ENCODE measurements at regions of chr18 and their contacts with region 1.

Region 1: GRCh38 chr18:76823587-76824011 is 1.2 kb downstream of the ZNF236 start:
- DNase-seq: no peak
- ATAC-seq: 0 out of 2 replicates have a peak, but pooled peaks have one; percentile 1
- H3K4me3 ChIP-seq: peak overlapping the region; percentile 78 to 86
- H3K27ac ChIP-seq: peak overlapping the region; percentile 90
- H3K4me1 ChIP-seq: peaks cover 36% of the 10 kb centered on the region
- H3K27me3 ChIP-seq: no peaks in the 10 kb centered on the region
- CTCF ChIP-seq: no peak

Region 2: DNA sequence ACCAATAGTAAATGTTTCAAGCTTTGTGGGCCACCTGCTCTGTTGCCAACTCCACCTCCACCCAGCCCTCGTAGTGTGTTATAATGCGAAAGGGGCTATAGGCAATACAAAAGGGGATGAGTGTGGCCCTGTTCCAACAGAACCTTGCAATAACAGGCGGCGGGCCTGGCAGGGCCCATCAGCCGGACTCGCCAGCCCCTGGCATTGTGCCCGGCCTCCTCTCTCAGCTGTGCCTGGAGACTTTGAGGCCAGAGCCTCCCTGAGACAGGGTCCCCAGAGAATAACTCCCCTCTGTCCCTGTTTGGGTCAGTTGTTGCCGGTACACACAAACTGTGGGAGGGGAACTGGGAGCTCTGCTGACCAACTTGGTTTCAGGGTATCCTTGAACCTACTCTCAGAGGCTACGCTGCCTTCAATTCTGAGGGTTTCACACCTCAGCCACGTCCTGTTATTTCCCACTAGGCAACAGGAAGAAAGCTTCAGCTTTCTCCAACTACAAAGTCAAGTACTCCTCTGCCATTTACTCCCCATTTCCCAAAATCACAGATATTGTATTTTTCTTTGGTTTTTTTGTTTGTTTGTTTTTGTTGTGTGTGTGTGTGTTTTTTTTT is 59.2 kb before region 1 on chr18:
- CTCF ChIA-PET with region 1: no interaction called
- POLR2A ChIA-PET with region 1: interaction called, 19 read pairs
- in situ Hi-C with region 1: no loop called
- intact Hi-C with region 1: no loop called
- DNase-seq: no peak
- ATAC-seq: no peak
- H3K4me3 ChIP-seq: no peak overlapping the region
- H3K27ac ChIP-seq: no peak overlapping the region
- H3K4me1 ChIP-seq: no peaks in the 10 kb centered on the region
- H3K27me3 ChIP-seq: no peaks in the 10 kb centered on the region
- CTCF ChIP-seq: no peak

Region 3: DNA sequence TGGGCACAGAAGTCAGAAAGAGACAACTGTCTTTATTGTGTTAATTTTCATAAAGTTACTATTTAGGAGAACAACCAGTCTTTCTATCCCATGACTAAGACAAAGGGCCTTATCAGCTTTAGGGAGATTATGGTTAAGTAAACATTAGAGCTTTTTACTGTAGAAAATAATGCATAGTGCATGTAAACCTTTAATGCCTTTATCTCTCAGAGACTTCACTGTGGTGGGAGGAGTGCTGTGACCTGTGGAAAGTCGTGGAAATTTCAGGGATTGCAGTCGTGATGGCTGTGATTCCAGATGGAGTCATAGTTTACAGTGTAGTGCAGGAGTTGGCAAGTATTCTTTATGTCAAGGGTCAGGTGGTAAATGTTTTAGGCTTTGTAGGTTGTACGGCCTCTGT is 14.6 kb after region 1 on chr18:
- CTCF ChIA-PET with region 1: no interaction called
- POLR2A ChIA-PET with region 1: interaction called, 15 read pairs
- in situ Hi-C with region 1: no loop called
- intact Hi-C with region 1: no loop called
- DNase-seq: no peak
- ATAC-seq: peak; percentile 91
- H3K4me3 ChIP-seq: peak overlapping the region; percentile 31 to 47
- H3K27ac ChIP-seq: peak overlapping the region; percentile 86
- H3K4me1 ChIP-seq: peaks cover 33% of the 10 kb centered on the region
- H3K27me3 ChIP-seq: no peaks in the 10 kb centered on the region
- CTCF ChIP-seq: no peak

Measured in Panc1 (cell line).